ENCODE measurements at regions of chr3 and their contacts with region 1.

Region 1: GRCh38 chr3:161096771-161097355 is 8.3 kb downstream of the B3GALNT1 start:
- DNase-seq: peak; percentile 11
- H3K4me3 ChIP-seq: no peak overlapping the region
- H3K27ac ChIP-seq: no peak overlapping the region
- H3K4me1 ChIP-seq: no peaks in the 10 kb centered on the region
- H3K27me3 ChIP-seq: no peaks in the 10 kb centered on the region
- CTCF ChIP-seq: peak; percentile 26 to 61

Region 2: GRCh38 chr3:161171113-161171512 is 74.2 kb after region 1 on chr3:
- CTCF ChIA-PET with region 1: interaction called, 3 read pairs
- dilution Hi-C with region 1: no loop called
- in situ Hi-C with region 1: no loop called
- intact Hi-C with region 1: loop called (anchors 1 kb)
- DNase-seq: peak; percentile 60
- H3K4me3 ChIP-seq: no peak overlapping the region
- H3K27ac ChIP-seq: no peak overlapping the region
- H3K4me1 ChIP-seq: peaks cover 8% of the 10 kb centered on the region
- H3K27me3 ChIP-seq: no peaks in the 10 kb centered on the region
- CTCF ChIP-seq: no peak

Region 3: DNA sequence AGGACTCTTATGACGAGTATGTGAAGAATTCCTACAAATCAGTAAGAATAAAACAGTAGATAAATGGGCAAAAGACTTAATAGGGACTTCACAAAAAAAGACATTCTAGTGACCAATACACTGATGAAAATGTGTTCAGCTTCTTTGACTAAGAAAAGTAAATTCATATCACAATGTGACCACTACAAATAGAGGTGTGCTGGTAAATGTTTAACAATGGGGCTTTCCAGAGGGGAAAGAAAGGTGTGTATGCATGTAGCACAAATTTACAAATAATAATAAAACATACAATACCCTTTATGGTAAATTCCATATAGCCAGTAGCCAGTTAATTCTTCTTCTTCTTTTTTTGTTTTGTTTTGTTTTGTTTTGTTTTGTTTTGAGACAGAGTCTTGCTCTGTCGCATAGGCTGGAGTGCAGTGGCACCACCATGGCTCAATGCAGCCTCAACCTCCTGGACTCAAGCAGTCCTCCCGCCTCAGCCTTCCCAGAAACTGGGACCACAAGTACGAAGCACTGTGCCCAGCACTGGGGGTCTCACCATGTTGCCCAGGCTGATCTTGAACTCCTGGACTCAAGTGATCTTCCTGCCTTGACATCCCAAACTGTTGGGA is 106.7 kb after region 1 on chr3:
- CTCF ChIA-PET with region 1: no interaction called
- dilution Hi-C with region 1: no loop called
- in situ Hi-C with region 1: no loop called
- intact Hi-C with region 1: loop called (anchors 1 kb)
- DNase-seq: no peak
- H3K4me3 ChIP-seq: no peak overlapping the region
- H3K27ac ChIP-seq: no peak overlapping the region
- H3K4me1 ChIP-seq: no peaks in the 10 kb centered on the region
- H3K27me3 ChIP-seq: no peaks in the 10 kb centered on the region
- CTCF ChIP-seq: no peak

Region 4: GRCh38 chr3:161220850-161221753 is 124.2 kb after region 1 on chr3 and contains the start of gene NMD3:
- CTCF ChIA-PET with region 1: no interaction called
- dilution Hi-C with region 1: no loop called
- in situ Hi-C with region 1: no loop called
- intact Hi-C with region 1: loop called (anchors 5 kb)
- DNase-seq: peak; percentile 91
- H3K4me3 ChIP-seq: peak within 1 kb of the TSS; percentile 93 to 97 (median 96)
- H3K27ac ChIP-seq: peak within 1 kb of the TSS; percentile 93
- H3K4me1 ChIP-seq: peaks cover 10% of the 10 kb centered on the region
- H3K27me3 ChIP-seq: no peaks in the 10 kb centered on the region
- CTCF ChIP-seq: no peak
- total RNA-seq, gene NMD3: 74.4 to 112 TPM

Region 5: DNA sequence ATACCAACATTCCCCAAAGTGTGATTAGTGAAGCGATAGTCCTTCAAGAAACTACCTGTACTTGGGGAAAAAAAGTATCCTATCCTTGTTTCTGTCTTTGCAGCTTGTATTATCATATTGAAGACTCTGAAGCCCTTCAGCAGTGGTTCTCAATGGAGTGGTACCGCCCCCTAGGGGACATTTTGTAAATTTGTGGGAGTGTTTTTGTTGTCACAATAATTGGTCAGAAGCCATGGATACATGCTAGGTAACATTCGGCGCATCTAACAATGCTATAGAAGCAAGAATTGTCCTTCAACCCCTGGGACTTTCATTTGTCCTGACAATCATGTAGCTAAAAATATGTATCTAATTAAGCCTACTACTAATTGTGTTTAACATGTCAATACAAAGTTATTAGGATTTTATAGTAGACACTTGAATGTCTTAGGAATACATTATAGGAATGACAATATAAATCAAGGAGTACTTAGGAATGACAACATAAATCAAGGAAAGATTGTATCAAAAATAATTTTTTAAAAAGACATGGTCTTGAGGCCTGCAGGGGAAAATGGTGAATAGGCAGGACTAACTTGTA is 177.9 kb after region 1 on chr3:
- CTCF ChIA-PET with region 1: interaction called, 3 read pairs
- dilution Hi-C with region 1: no loop called
- in situ Hi-C with region 1: no loop called
- intact Hi-C with region 1: loop called (anchors 1 kb)
- DNase-seq: peak; percentile 55
- H3K4me3 ChIP-seq: no peak overlapping the region
- H3K27ac ChIP-seq: no peak overlapping the region
- H3K4me1 ChIP-seq: peaks cover 5% of the 10 kb centered on the region
- H3K27me3 ChIP-seq: no peaks in the 10 kb centered on the region
- CTCF ChIP-seq: peak; percentile 66 to 80